Activated CD8-positive, alpha-beta T cell treated with anti-CD3 and anti-CD28 coated beads for 36 hours (primary cell): ENCODE measurements at regions of chr6 and their contacts with region 1.

Region 1: GRCh38 chr6:98834060-98835031 is at the start of gene POU3F2:
- DNase-seq: peak; percentile 75
- ATAC-seq: peak; percentile 78
- H3K4me3 Mint-ChIP-seq: peak within 1 kb of the TSS; percentile 75
- H3K27ac Mint-ChIP-seq: no peak within 1 kb of the TSS
- H3K4me1 Mint-ChIP-seq: peaks cover 35% of the 10 kb centered on the region
- H3K27me3 Mint-ChIP-seq: peaks cover 78% of the 10 kb centered on the region
- CTCF ChIP-seq: no peak
- total RNA-seq, gene POU3F2: not detected

Region 2: DNA sequence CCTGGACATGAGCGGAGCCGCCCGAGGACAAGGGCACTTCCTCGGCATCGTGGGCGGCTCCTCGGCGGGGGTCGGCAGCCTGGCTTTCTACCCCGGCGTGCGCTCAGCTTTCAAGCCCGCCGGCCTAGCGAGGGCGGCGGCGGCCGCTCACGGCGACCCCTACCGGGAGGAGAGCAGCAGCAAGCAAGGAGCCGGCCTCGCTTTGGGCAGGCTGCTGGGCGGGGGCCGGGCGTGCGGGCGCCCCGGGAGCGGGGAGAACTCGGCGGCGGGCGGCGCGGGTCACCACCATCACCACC is 779.0 kb after region 1 on chr6:
- CTCF ChIA-PET with region 1: no interaction called
- POLR2A ChIA-PET with region 1: no interaction called
- intact Hi-C with region 1: loop called (anchors 5 kb)
- DNase-seq: peak; percentile 49
- ATAC-seq: peak; percentile 64
- H3K4me3 Mint-ChIP-seq: peak overlapping the region; percentile 66
- H3K27ac Mint-ChIP-seq: no peak overlapping the region
- H3K4me1 Mint-ChIP-seq: peaks cover 32% of the 10 kb centered on the region
- H3K27me3 Mint-ChIP-seq: peaks cover 74% of the 10 kb centered on the region
- CTCF ChIP-seq: no peak